AG04449 (cell line): ENCODE measurements at regions of chr4 and their contacts with region 1.

Region 1: DNA sequence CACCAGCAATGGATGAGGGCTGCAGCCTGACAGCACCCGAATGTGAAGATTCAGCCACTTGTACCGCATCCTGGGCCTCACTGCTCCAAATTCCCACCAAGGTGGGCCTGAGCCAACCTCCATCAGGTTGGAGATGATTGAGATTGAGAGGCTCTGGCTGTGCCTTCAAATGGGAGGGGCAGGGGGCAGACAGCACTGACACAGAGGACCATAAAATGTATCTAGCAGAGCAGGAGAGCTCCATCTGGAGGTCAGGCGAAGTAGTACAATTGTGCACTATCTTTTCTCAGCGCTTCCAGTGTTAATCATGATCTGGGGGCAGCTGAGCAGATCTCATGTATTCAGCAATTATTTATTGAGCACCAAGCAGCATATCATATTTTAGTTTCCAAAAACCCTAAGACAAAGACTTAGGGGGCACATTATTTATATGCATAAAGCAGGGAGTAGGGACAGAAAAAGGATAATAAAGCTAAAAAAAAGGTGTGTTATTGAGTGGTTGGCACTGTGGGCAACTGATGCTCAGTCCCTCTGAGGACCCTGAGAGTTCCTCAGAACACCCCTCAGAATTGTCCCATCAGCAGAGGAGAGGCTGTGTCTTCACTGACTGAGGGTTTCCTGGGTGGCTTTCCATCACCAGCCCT is 31.6 kb upstream of the C1QTNF7 start:
- DNase-seq: no peak
- H3K4me3 ChIP-seq: no peak overlapping the region
- CTCF ChIP-seq: peak; percentile 60

Region 2: GRCh38 chr4:15231265-15232091 is 164.8 kb before region 1 on chr4:
- CTCF ChIA-PET with region 1: interaction called, 43 read pairs
- POLR2A ChIA-PET with region 1: interaction called, 4 read pairs
- DNase-seq: no peak
- H3K4me3 ChIP-seq: no peak overlapping the region
- CTCF ChIP-seq: peak; percentile 69

Region 3: DNA sequence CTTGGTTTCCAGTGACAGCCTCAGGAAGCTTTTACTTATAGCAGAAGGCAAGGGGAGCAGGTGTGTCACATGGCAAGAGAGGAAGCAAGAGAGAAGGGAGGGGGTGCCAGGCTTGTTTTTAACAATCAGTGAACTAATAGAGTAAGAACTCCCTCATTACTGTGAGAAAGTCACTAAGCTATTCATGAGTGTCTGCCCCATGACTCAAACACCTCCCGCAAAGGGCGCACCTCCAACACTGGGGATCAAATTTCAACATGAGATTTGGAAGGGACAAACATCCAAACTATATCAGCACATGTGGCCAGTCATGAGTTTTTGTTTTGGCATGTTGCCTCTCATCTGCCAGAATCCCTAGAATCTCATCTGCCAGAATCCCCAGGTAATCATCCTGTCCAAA is 151.9 kb before region 1 on chr4:
- CTCF ChIA-PET with region 1: interaction called, 43 read pairs
- POLR2A ChIA-PET with region 1: no interaction called
- DNase-seq: no peak
- H3K4me3 ChIP-seq: no peak overlapping the region
- CTCF ChIP-seq: no peak

Region 4: GRCh38 chr4:15385928-15386327 is 10.4 kb before region 1 on chr4:
- CTCF ChIA-PET with region 1: interaction called, 74 read pairs
- POLR2A ChIA-PET with region 1: no interaction called
- DNase-seq: no peak
- H3K4me3 ChIP-seq: no peak overlapping the region
- CTCF ChIP-seq: no peak

Region 5: DNA sequence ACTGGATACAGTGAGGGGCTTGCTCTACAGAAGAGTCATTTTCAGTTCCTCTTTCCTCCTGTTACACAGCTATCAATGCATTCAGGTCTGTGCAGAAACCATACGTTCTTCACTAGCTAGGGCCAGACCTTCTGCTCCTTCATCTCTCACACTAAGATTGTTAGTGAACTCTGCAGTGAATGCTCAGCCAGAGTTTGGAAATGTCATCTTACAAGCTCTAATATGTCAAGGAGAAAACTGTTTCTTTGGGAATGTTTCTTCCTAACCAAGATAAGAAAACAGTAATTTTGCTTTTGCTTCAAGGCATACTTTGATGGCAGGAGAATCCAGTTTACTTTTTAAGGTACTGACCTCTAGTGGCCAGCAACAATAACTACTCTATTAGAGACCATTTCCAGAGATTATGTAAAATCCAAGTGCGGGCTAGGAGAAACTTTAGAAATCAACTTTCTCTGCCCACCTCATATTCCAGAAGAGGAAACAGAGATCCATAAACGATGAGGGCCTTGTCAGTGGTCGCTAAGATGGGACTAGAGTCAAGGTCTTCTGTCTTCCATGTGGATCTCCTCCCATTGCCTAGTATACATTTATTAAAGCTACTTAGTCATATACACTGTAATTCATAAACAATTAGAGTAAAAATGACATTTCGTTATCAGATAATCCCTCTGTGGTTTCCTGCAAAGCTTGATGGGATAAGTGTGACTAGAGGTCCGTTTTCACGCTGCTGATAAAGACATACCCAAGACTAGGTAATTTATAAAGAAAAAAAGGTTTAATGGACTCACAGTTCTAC is 61.3 kb after region 1 on chr4:
- CTCF ChIA-PET with region 1: interaction called, 28 read pairs
- POLR2A ChIA-PET with region 1: no interaction called
- DNase-seq: no peak
- H3K4me3 ChIP-seq: no peak overlapping the region
- CTCF ChIP-seq: peak; percentile 48

Region 6: GRCh38 chr4:15601862-15602261 is 205.6 kb after region 1 on chr4:
- CTCF ChIA-PET with region 1: no interaction called
- POLR2A ChIA-PET with region 1: no interaction called
- DNase-seq: no peak
- H3K4me3 ChIP-seq: no peak overlapping the region
- CTCF ChIP-seq: no peak